Ovary (tissue), 10 donors: ENCODE measurements at regions of chr2 and their contacts with region 1.

Region 1: GRCh38 chr2:220949466-220949865 is 622.6 kb downstream of the EPHA4 start:
- DNase-seq: no peak
- H3K4me3 ChIP-seq: no peak overlapping the region
- H3K27ac ChIP-seq: no peak overlapping the region
- H3K4me1 ChIP-seq: no peaks in the 10 kb centered on the region
- H3K27me3 ChIP-seq: no peaks in the 10 kb centered on the region
- CTCF ChIP-seq: no peak
- EP300 ChIP-seq: no peak
- POLR2A ChIP-seq: no peak

Region 2: GRCh38 chr2:220646424-220646823 is 303.0 kb before region 1 on chr2:
- intact Hi-C with region 1: loop called in 1 of 4 experiments (anchors 5 kb)
- DNase-seq: no peak
- H3K4me3 ChIP-seq: no peak overlapping the region
- H3K27ac ChIP-seq: no peak overlapping the region
- H3K4me1 ChIP-seq: no peaks in the 10 kb centered on the region
- H3K27me3 ChIP-seq: no peaks in the 10 kb centered on the region
- CTCF ChIP-seq: no peak
- EP300 ChIP-seq: no peak
- POLR2A ChIP-seq: no peak